CD14-positive monocyte (primary cell): ENCODE measurements at regions of chr1 and their contacts with region 1.

Region 1: DNA sequence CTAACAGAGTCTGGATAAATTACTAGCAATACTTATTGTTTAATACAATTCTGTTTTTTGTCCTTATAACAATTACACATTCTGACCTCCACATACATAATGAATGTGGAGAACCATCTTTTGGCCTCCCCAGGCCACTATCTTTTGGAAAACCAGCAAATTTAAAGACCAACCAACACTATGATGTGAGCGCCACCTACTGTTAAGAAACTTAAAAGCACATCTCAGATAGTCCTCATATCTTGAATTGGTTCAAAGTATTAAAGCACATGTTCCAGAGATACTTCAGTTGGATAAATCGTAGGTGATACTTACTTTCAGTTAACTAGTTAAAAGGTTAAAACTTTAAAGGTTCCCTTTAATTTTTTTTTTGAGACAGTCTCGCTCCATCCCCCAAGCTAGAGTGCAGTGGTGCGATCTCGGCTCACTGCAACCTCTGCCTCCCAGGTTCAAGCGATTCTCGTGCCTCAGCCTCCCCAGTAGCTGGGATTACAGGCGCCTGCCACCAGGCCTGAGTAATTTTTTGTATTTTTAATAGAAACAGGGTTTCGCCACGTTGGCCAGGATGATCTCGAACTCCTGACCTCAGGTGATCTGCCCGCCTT is 29.3 kb upstream of the USP1 start:
- DNase-seq: peak; percentile 25 to 62 (median 40)
- H3K4me3 ChIP-seq: no peak overlapping the region
- H3K4me3 Mint-ChIP-seq: no peak overlapping the region
- H3K27ac ChIP-seq: no peak overlapping the region
- H3K27ac Mint-ChIP-seq: no peak overlapping the region
- H3K4me1 ChIP-seq: no peaks in the 10 kb centered on the region
- H3K4me1 Mint-ChIP-seq: no peaks in the 10 kb centered on the region
- H3K27me3 ChIP-seq: no peaks in the 10 kb centered on the region
- H3K27me3 Mint-ChIP-seq: peaks cover 0 to 4% (median 0%) of the 10 kb centered on the region in 3 donors
- CTCF ChIP-seq: peak; percentile 81

Region 2: GRCh38 chr1:62082456-62083363 is 324.8 kb before region 1 on chr1:
- intact Hi-C with region 1: loop called in 1 of 2 experiments (anchors 10 kb)
- DNase-seq: peak in 2 of 3 donors; percentile 13 to 27
- H3K4me3 ChIP-seq: no peak overlapping the region
- H3K4me3 Mint-ChIP-seq: no peak overlapping the region
- H3K27ac ChIP-seq: no peak overlapping the region
- H3K27ac Mint-ChIP-seq: no peak overlapping the region
- H3K4me1 ChIP-seq: no peaks in the 10 kb centered on the region
- H3K4me1 Mint-ChIP-seq: no peaks in the 10 kb centered on the region
- H3K27me3 ChIP-seq: no peaks in the 10 kb centered on the region
- H3K27me3 Mint-ChIP-seq: peaks cover 0 to 2% (median 0%) of the 10 kb centered on the region in 3 donors
- CTCF ChIP-seq: peak; percentile 91

Region 3: DNA sequence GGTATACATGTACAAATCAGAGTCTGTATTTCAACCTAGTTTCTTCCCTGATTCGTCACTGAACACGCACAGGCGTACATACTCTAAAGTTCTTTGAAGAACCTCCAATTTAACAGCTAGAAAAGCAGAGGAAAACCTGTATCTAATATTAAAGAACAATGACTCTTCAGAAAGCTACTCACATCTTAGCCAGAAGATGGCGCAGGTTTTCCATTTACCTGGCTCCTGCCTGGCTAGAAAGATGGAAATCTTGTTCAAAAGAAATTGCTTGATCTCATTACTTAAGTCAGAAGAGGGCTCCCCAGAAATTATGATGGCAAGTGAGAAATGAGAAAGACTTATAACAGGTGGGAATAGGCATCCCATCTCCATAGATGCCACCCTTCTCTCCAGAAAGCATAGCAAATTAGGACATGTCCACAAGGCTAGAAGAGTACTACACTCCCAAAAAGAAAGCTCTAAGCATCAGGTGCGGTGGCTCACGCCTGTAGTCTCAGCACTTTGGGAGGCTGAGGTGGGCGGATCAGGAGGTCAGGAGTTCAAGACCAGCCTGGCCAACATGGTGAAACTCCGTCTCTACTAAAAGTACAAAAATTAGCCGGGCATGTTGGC is 231.8 kb before region 1 on chr1:
- intact Hi-C with region 1: loop called (anchors 1 to 2 kb)
- DNase-seq: peak; percentile 11 to 40 (median 20)
- H3K4me3 ChIP-seq: no peak overlapping the region
- H3K4me3 Mint-ChIP-seq: no peak overlapping the region
- H3K27ac ChIP-seq: no peak overlapping the region
- H3K27ac Mint-ChIP-seq: no peak overlapping the region
- H3K4me1 ChIP-seq: no peaks in the 10 kb centered on the region
- H3K4me1 Mint-ChIP-seq: no peaks in the 10 kb centered on the region
- H3K27me3 ChIP-seq: no peaks in the 10 kb centered on the region
- H3K27me3 Mint-ChIP-seq: peaks cover 2 to 5% (median 4%) of the 10 kb centered on the region in 3 donors
- CTCF ChIP-seq: peak; percentile 75

Region 4: GRCh38 chr1:62377043-62377562 is 30.4 kb before region 1 on chr1:
- intact Hi-C with region 1: no loop called
- DNase-seq: no peak
- H3K4me3 ChIP-seq: no peak overlapping the region
- H3K4me3 Mint-ChIP-seq: no peak overlapping the region
- H3K27ac ChIP-seq: no peak overlapping the region
- H3K27ac Mint-ChIP-seq: no peak overlapping the region
- H3K4me1 ChIP-seq: no peaks in the 10 kb centered on the region
- H3K4me1 Mint-ChIP-seq: no peaks in the 10 kb centered on the region
- H3K27me3 ChIP-seq: no peaks in the 10 kb centered on the region
- H3K27me3 Mint-ChIP-seq: peaks cover 0 to 3% (median 1%) of the 10 kb centered on the region in 3 donors
- CTCF ChIP-seq: no peak